GM10248 (cell line): ENCODE measurements at regions of chr12 and their contacts with region 1.

Region 1: GRCh38 chr12:47837190-47838171 is 17.8 kb upstream of the HDAC7 start:
- DNase-seq: peak; percentile 69
- CTCF ChIP-seq: peak; percentile 90

Region 2: GRCh38 chr12:47602325-47602724 is 235.2 kb before region 1 on chr12:
- CTCF ChIA-PET with region 1: no interaction called
- POLR2A ChIA-PET with region 1: no interaction called
- DNase-seq: no peak
- CTCF ChIP-seq: no peak

Region 3: GRCh38 chr12:47731723-47732122 is 105.8 kb before region 1 on chr12:
- CTCF ChIA-PET with region 1: interaction called, 18 read pairs
- POLR2A ChIA-PET with region 1: no interaction called
- DNase-seq: no peak
- CTCF ChIP-seq: no peak

Region 4: DNA sequence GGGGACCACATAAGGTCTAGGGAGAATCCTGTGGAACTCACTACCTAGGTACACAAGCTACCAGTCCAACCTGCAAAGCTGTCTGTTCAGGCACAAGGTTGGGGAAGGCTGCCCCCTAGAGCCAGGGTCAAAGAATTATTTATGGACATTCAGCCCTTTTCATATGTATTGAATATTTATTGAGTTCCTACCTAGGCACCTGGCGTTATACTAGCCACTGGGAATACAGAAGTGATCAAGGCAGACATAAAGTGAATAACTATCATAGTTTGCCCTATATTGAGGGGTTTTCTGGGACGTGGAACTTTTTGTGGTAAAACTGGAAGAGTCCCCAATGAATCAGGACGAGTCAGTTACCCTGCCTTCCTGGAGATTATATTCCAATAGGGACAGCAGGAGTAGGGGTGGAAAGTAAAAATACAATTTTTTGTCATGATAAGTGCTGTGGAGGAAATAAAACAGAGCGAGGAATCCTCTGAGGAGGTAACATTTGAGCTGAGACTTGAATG is 70.2 kb before region 1 on chr12:
- CTCF ChIA-PET with region 1: interaction called, 32 read pairs
- POLR2A ChIA-PET with region 1: no interaction called
- DNase-seq: peak; percentile 71
- CTCF ChIP-seq: peak; percentile 83

Region 5: DNA sequence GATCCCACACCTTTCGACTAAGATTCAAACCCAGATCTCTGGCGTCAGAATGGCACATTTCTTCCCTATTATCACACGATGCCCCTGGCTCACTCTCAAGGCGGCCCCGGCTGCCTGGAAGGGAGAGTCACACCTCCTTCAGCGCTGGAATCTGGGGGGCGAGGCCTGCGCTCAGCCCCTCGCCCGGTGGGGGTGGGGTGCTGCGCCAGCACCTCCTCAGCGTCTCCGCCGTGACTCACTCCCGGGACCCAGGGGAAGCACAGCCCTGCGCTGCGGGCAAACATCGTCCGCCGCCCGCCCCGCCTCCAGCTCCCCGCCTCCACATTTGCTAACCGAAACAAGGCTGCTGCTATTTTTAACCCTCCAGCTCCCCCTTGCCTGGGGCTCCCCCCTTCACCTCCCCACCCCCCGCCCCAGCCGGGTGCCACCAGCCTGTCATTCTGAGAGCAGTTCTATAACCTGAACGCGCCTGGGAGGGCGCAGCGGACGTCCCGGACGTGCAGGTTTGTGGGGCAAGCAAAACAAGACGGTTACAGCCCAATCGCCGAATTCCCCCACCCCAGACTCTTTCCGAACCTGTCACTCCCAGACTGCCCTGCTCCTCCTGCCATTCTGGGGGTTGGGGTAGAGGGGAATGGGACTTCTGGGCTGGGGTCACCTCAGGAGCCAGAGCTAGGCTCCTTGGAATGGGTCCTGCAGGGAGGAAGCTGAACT is 24.5 kb before region 1 on chr12:
- CTCF ChIA-PET with region 1: interaction called, 685 read pairs
- POLR2A ChIA-PET with region 1: interaction called, 12 read pairs
- DNase-seq: peak; percentile 93
- CTCF ChIP-seq: no peak

Region 6: DNA sequence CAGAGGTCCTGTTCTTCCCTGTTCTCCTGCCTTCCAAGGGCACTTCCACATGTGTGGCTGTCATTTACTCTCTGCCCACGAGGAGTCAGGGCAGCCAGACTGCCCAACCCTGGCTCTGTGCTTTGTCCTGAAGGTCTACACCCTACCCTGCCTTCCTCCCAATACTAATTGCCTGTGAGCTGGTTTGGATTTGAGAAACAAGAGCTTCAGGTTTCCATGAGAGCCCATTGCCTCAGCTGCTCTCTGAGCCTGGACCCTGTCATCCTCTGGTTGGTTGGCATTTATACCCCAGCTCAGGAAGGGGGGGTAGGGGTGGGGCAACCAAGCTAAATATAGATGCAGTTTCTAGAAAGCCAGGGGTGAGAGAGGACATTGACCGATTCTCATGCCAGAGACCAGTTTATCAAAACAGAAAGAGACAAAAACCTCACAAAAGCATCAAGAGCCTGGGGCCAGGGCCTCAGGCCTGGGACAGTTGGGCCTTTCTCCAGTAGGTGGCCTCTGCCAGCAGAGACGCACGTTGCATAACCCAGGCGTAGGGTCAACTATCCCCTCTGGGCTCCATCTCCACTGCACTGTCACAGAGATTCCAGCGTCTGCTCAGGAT is 32.8 kb after region 1 on chr12:
- CTCF ChIA-PET with region 1: interaction called, 42 read pairs
- POLR2A ChIA-PET with region 1: interaction called, 3 read pairs
- DNase-seq: no peak
- CTCF ChIP-seq: peak; percentile 46

Region 7: DNA sequence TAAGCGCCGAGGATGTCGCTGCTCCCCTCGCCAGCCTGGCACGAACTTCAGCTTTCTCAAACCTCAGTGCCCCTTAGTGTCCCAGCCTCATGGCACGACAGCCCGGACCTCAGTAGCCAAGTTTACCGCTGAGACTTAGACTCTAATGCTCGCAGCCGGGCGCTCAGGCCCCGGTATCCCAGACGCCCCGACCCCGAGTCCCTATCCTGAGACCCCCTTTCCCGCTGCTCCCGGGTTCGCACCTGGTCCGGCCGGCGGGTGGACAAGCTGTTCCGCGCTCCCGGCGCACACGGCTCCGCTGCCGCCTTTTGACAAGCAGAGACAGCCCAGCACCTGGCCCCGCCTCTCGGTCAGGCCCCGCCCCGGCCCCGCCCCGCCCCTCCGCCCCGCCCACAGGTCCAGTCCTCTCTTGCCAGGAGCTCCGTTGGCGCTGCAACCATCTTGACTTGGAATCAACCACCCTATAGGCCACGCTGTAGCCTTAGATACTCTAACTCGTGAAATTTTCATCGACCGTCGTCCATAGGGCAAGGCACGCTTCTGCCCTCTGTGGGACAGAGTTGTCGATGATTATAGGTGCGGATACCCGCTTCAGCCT is 67.3 kb after region 1 on chr12 and contains the start of gene VDR:
- CTCF ChIA-PET with region 1: interaction called, 10 read pairs
- POLR2A ChIA-PET with region 1: no interaction called
- DNase-seq: peak; percentile 92
- CTCF ChIP-seq: no peak